Heart right ventricle (tissue), 16 donors: ENCODE measurements at regions of chr5 and their contacts with region 1.

Region 1: GRCh38 chr5:67879620-67880510 is 335.7 kb upstream of the PIK3R1 start:
- DNase-seq: no peak
- ATAC-seq: peak in 4 of 8 donors; percentile 36 to 61 (median 53)
- H3K4me3 ChIP-seq: no peak overlapping the region
- H3K27ac ChIP-seq: no peak overlapping the region
- H3K4me1 ChIP-seq: peaks cover 0 to 6% (median 0%) of the 10 kb centered on the region in 9 donors
- H3K27me3 ChIP-seq: no peaks in the 10 kb centered on the region
- CTCF ChIP-seq: no peak

Region 2: GRCh38 chr5:67752331-67752673 is 127.6 kb before region 1 on chr5:
- intact Hi-C with region 1: no loop called
- DNase-seq: no peak
- ATAC-seq: no peak
- H3K4me3 ChIP-seq: no peak overlapping the region
- H3K27ac ChIP-seq: no peak overlapping the region
- H3K4me1 ChIP-seq: no peaks in the 10 kb centered on the region
- H3K27me3 ChIP-seq: no peaks in the 10 kb centered on the region
- CTCF ChIP-seq: no peak

Region 3: GRCh38 chr5:67971223-67971830 is 91.5 kb after region 1 on chr5:
- intact Hi-C with region 1: loop called in 1 of 10 experiments (anchors 10 kb)
- DNase-seq: no peak
- ATAC-seq: peak in 7 of 8 donors; percentile 57 to 89 (median 77)
- H3K4me3 ChIP-seq: no peak overlapping the region
- H3K27ac ChIP-seq: peak overlapping the region in 8 of 10 donors; percentile 17 to 69 (median 46)
- H3K4me1 ChIP-seq: peaks cover 0 to 27% (median 19%) of the 10 kb centered on the region in 9 donors
- H3K27me3 ChIP-seq: no peaks in the 10 kb centered on the region
- CTCF ChIP-seq: no peak